ENCODE measurements at regions of chr3 and their contacts with region 1.

Region 1: DNA sequence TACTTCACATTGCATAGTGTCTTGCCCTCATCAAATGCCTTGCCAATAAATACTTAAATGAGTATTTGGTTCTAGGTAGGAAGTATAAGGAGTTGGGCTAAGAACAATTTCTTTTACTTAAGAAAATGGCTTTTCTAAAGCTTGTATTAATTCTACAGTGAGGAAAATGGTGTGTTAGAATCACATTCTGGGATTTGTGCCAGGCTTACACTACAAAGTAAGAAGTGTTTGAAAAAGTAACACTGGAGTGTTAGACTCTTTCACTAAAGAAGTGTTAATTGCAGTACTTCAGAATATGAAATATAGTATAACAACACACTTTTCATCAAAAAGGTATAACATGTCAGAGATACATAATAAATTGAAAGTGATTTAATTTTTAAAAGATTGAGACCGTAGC is 328.7 kb downstream of the C3orf38 start:
- DNase-seq: no peak
- H3K4me3 ChIP-seq: no peak overlapping the region
- CTCF ChIP-seq: no peak

Region 2: GRCh38 chr3:88385090-88385489 is 93.4 kb before region 1 on chr3:
- in situ Hi-C with region 1: no loop called
- DNase-seq: no peak
- H3K4me3 ChIP-seq: no peak overlapping the region
- CTCF ChIP-seq: no peak

Region 3: GRCh38 chr3:88440701-88441100 is 37.8 kb before region 1 on chr3:
- in situ Hi-C with region 1: loop called (anchors 5 kb)
- DNase-seq: no peak
- H3K4me3 ChIP-seq: no peak overlapping the region
- CTCF ChIP-seq: no peak

Region 4: GRCh38 chr3:88595026-88595425 is 116.6 kb after region 1 on chr3:
- in situ Hi-C with region 1: no loop called
- DNase-seq: no peak
- H3K4me3 ChIP-seq: no peak overlapping the region
- CTCF ChIP-seq: no peak